ENCODE measurements at regions of chr2 and their contacts with region 1.

Region 1: GRCh38 chr2:137659612-137660011 is 304.7 kb upstream of the HNMT start:
- DNase-seq: peak; percentile 68
- H3K4me3 Mint-ChIP-seq: no peak overlapping the region
- H3K27ac Mint-ChIP-seq: no peak overlapping the region
- H3K4me1 Mint-ChIP-seq: no peaks in the 10 kb centered on the region
- H3K27me3 Mint-ChIP-seq: no peaks in the 10 kb centered on the region
- CTCF ChIP-seq: peak; percentile 53

Region 2: GRCh38 chr2:136874258-136874657 is 785.4 kb before region 1 on chr2:
- CTCF ChIA-PET with region 1: interaction called, 3 read pairs
- POLR2A ChIA-PET with region 1: no interaction called
- intact Hi-C with region 1: loop called (anchors 1 kb)
- DNase-seq: peak; percentile 55
- H3K4me3 Mint-ChIP-seq: no peak overlapping the region
- H3K27ac Mint-ChIP-seq: no peak overlapping the region
- H3K4me1 Mint-ChIP-seq: no peaks in the 10 kb centered on the region
- H3K27me3 Mint-ChIP-seq: peaks cover 19% of the 10 kb centered on the region
- CTCF ChIP-seq: peak; percentile 43

Region 3: DNA sequence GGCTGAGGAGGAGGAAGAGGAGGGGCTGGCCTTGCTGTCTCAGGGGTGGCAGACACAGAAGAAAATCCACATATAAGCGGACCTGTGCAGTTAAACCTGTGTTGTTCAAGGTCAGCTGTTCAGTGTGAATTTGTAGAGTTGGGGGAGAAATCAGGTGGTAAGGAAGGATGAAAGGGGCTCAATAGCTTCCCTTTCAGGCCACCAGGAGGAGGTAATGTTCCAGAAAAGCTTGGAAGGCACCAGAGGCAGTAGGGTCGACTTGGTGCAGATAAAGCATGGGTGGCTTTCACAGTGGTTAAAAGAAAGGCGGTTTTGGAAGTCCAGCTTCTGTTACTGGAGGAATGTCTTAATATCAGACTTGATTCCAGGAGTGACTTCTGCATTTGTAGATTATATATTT is 726.9 kb before region 1 on chr2:
- CTCF ChIA-PET with region 1: interaction called, 62 read pairs
- POLR2A ChIA-PET with region 1: no interaction called
- intact Hi-C with region 1: loop called (anchors 1 kb)
- DNase-seq: peak; percentile 56
- H3K4me3 Mint-ChIP-seq: no peak overlapping the region
- H3K27ac Mint-ChIP-seq: no peak overlapping the region
- H3K4me1 Mint-ChIP-seq: no peaks in the 10 kb centered on the region
- H3K27me3 Mint-ChIP-seq: no peaks in the 10 kb centered on the region
- CTCF ChIP-seq: peak; percentile 64

Region 4: GRCh38 chr2:137163407-137163806 is 496.2 kb before region 1 on chr2:
- CTCF ChIA-PET with region 1: interaction called, 5 read pairs
- POLR2A ChIA-PET with region 1: no interaction called
- intact Hi-C with region 1: loop called (anchors 1 kb)
- DNase-seq: no peak
- H3K4me3 Mint-ChIP-seq: no peak overlapping the region
- H3K27ac Mint-ChIP-seq: peak overlapping the region; percentile 5
- H3K4me1 Mint-ChIP-seq: peaks cover 10% of the 10 kb centered on the region
- H3K27me3 Mint-ChIP-seq: no peaks in the 10 kb centered on the region
- CTCF ChIP-seq: no peak

Region 5: GRCh38 chr2:137467246-137467862 is 192.3 kb before region 1 on chr2:
- CTCF ChIA-PET with region 1: interaction called, 13 read pairs
- POLR2A ChIA-PET with region 1: no interaction called
- intact Hi-C with region 1: loop called (anchors 1 kb)
- DNase-seq: peak; percentile 73
- H3K4me3 Mint-ChIP-seq: no peak overlapping the region
- H3K27ac Mint-ChIP-seq: no peak overlapping the region
- H3K4me1 Mint-ChIP-seq: no peaks in the 10 kb centered on the region
- H3K27me3 Mint-ChIP-seq: no peaks in the 10 kb centered on the region
- CTCF ChIP-seq: peak; percentile 60

Region 6: GRCh38 chr2:137521658-137522619 is 137.7 kb before region 1 on chr2:
- CTCF ChIA-PET with region 1: no interaction called
- POLR2A ChIA-PET with region 1: no interaction called
- intact Hi-C with region 1: no loop called
- DNase-seq: peak; percentile 70
- H3K4me3 Mint-ChIP-seq: no peak overlapping the region
- H3K27ac Mint-ChIP-seq: peak overlapping the region; percentile 57
- H3K4me1 Mint-ChIP-seq: peaks cover 8% of the 10 kb centered on the region
- H3K27me3 Mint-ChIP-seq: no peaks in the 10 kb centered on the region
- CTCF ChIP-seq: no peak